Activated CD8-positive, alpha-beta T cell treated with anti-CD3 and anti-CD28 coated beads for 36 hours (primary cell): ENCODE measurements at regions of chr11 and their contacts with region 1.

Region 1: GRCh38 chr11:9534791-9535781 is 38.4 kb upstream of the WEE1 start:
- DNase-seq: peak; percentile 89
- ATAC-seq: peak; percentile 75
- H3K4me3 Mint-ChIP-seq: no peak overlapping the region
- H3K27ac Mint-ChIP-seq: no peak overlapping the region
- H3K4me1 Mint-ChIP-seq: no peaks in the 10 kb centered on the region
- H3K27me3 Mint-ChIP-seq: no peaks in the 10 kb centered on the region
- CTCF ChIP-seq: peak; percentile 83

Region 2: DNA sequence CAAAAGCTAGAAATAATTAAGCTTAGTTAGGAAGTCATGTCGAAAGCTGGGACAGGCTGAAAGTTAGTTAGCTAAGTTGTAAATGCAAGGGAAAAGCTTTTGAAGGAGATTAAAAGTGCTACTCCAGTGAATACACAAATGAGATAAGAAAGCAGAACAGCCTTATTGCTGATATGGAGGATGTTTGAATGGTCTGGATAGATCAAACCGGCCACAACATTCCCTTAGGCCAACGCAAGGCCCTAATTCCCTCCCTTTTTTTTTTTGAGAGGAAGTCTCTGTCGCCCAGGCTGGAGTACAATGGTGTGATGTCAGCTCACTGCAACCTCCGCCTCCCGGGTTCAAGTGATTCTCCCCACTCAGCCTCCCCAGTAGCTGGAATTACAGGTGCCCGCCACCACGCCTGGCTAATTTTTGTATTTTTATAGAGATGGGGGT is 15.1 kb after region 1 on chr11:
- CTCF ChIA-PET with region 1: interaction called, 36 read pairs
- POLR2A ChIA-PET with region 1: no interaction called
- intact Hi-C with region 1: no loop called
- DNase-seq: no peak
- ATAC-seq: no peak
- H3K4me3 Mint-ChIP-seq: no peak overlapping the region
- H3K27ac Mint-ChIP-seq: no peak overlapping the region
- H3K4me1 Mint-ChIP-seq: no peaks in the 10 kb centered on the region
- H3K27me3 Mint-ChIP-seq: no peaks in the 10 kb centered on the region
- CTCF ChIP-seq: no peak

Region 3: GRCh38 chr11:9573052-9573774 is 38.1 kb after region 1 on chr11 and contains the start of gene WEE1:
- CTCF ChIA-PET with region 1: interaction called, 22 read pairs
- POLR2A ChIA-PET with region 1: interaction called, 11 read pairs
- intact Hi-C with region 1: no loop called
- DNase-seq: peak; percentile 98
- ATAC-seq: peak; percentile 96
- H3K4me3 Mint-ChIP-seq: peak within 1 kb of the TSS; percentile 83
- H3K27ac Mint-ChIP-seq: peak within 1 kb of the TSS; percentile 81
- H3K4me1 Mint-ChIP-seq: peaks cover 18% of the 10 kb centered on the region
- H3K27me3 Mint-ChIP-seq: peaks cover 8% of the 10 kb centered on the region
- CTCF ChIP-seq: no peak
- total RNA-seq, gene WEE1: 45.2 to 49.2 TPM

Region 4: DNA sequence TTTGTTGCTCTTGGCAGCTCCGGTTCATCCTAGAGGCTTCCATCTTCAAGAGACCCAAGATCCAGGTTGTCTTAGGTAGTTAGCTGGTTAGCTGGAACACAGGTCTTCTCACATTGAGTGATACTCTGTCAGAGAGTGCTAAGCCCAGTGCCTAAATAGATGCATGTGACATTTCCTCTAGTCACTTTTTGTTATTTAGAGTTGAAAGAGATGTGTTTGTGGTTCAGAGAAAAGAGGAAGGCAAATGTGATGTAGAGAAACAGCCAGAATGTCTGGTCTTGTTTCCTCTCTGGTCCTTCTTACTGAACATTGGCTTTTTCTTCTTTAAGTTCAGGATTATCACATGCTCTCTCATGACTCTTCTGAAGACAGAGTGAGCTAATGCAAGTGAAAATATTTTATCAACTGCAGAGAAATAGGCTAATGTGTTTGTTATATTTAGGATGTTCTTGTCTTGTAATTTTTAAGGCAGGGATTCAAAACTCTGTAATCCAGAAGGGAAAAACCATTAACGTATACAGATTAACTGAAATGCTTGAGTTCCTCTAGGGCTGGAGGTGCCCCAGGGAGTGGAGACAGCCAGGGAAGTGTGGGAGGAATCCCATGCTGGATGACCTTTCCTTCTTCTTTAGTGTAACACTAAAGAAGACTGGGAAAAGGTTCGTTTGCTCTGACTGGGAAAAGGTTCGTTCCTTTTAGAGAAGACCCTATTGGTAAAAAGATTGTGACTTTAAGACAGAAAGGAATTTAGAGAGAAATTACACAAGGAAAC is 204.2 kb after region 1 on chr11:
- CTCF ChIA-PET with region 1: interaction called, 13 read pairs
- POLR2A ChIA-PET with region 1: no interaction called
- intact Hi-C with region 1: no loop called
- DNase-seq: no peak
- ATAC-seq: peak; percentile 34
- H3K4me3 Mint-ChIP-seq: no peak overlapping the region
- H3K27ac Mint-ChIP-seq: no peak overlapping the region
- H3K4me1 Mint-ChIP-seq: peaks cover 2% of the 10 kb centered on the region
- H3K27me3 Mint-ChIP-seq: no peaks in the 10 kb centered on the region
- CTCF ChIP-seq: no peak